ENCODE measurements at regions of chr5 and their contacts with region 1.

Region 1: DNA sequence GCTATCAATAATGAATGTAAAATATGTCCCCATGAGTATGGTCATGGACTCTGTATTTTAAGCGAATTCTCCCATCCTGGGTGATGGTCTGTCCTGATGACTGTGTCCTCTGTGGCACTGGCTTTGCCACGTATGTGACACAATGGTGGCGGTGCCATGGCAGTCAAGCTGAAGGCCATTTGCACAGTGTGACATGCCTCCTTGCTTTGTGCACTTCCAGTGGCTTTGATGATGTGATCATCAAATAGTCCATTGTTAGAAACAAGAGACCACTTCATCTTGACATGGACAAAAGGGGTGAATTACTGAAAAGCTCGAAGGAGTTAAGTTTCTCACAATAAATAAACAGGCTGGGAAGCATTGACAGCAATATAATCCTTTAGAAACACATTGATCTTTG is 31.0 kb upstream of the PRRC1 start:
- DNase-seq: peak in 1 of 2 experiments; percentile 29
- H3K4me3 ChIP-seq: no peak overlapping the region
- H3K4me1 ChIP-seq: no peaks in the 10 kb centered on the region
- H3K27me3 ChIP-seq: peaks cover 8% of the 10 kb centered on the region

Region 2: GRCh38 chr5:127060470-127060985 is 425.9 kb before region 1 on chr5:
- in situ Hi-C with region 1: no loop called
- DNase-seq: no peak
- H3K4me3 ChIP-seq: no peak overlapping the region
- H3K4me1 ChIP-seq: no peaks in the 10 kb centered on the region
- H3K27me3 ChIP-seq: no peaks in the 10 kb centered on the region

Region 3: GRCh38 chr5:127290019-127290945 is 196.2 kb before region 1 on chr5 and contains the start of gene MEGF10:
- in situ Hi-C with region 1: loop called (anchors 10 kb)
- DNase-seq: peak; percentile 32 to 75
- H3K4me3 ChIP-seq: peak within 1 kb of the TSS; percentile 27
- H3K4me1 ChIP-seq: no peaks in the 10 kb centered on the region; the same call in 1 of the 2 replicates
- H3K27me3 ChIP-seq: peaks cover 7% of the 10 kb centered on the region; the same call in 1 of the 2 replicates

Measured in HAP-1 (cell line).